ENCODE measurements at regions of chr17 and their contacts with region 1.

Region 1: GRCh38 chr17:7329374-7329996 is 350 bp upstream of the NEURL4 start:
- DNase-seq: peak; percentile 93 to 97
- H3K4me3 ChIP-seq: peak overlapping the region; percentile 89
- H3K4me3 Mint-ChIP-seq: peak overlapping the region; percentile 76
- H3K27ac Mint-ChIP-seq: peak overlapping the region; percentile 48
- H3K4me1 ChIP-seq: 0 out of 2 replicates have a peak, but pooled peaks cover 4% of the 10 kb centered on the region
- H3K4me1 Mint-ChIP-seq: peaks cover 10% of the 10 kb centered on the region
- H3K27me3 ChIP-seq: no peaks in the 10 kb centered on the region
- H3K27me3 Mint-ChIP-seq: no peaks in the 10 kb centered on the region
- CTCF ChIP-seq: no peak

Region 2: GRCh38 chr17:7314719-7315569 is 14.5 kb before region 1 on chr17 and contains the start of gene GPS2:
- CTCF ChIA-PET with region 1: interaction called, 3 read pairs
- POLR2A ChIA-PET with region 1: interaction called, 7 read pairs
- intact Hi-C with region 1: loop called (anchors 2 kb)
- DNase-seq: peak; percentile 81 to 86
- H3K4me3 ChIP-seq: peak within 1 kb of the TSS; percentile 82
- H3K4me3 Mint-ChIP-seq: peak within 1 kb of the TSS; percentile 82
- H3K27ac Mint-ChIP-seq: peak within 1 kb of the TSS; percentile 93
- H3K4me1 ChIP-seq: peaks cover 4% of the 10 kb centered on the region; the same call in 1 of the 2 replicates
- H3K4me1 Mint-ChIP-seq: peaks cover 18% of the 10 kb centered on the region
- H3K27me3 ChIP-seq: no peaks in the 10 kb centered on the region
- H3K27me3 Mint-ChIP-seq: no peaks in the 10 kb centered on the region
- CTCF ChIP-seq: no peak
- total RNA-seq, gene GPS2: 36.0 and 39.2 TPM in 2 replicates

Region 3: GRCh38 chr17:7502987-7503386 is 173.5 kb after region 1 on chr17:
- CTCF ChIA-PET with region 1: no interaction called
- POLR2A ChIA-PET with region 1: no interaction called
- intact Hi-C with region 1: no loop called
- DNase-seq: peak in 1 of 2 experiments; percentile 20
- H3K4me3 ChIP-seq: no peak overlapping the region
- H3K4me3 Mint-ChIP-seq: no peak overlapping the region
- H3K27ac Mint-ChIP-seq: no peak overlapping the region
- H3K4me1 ChIP-seq: no peaks in the 10 kb centered on the region
- H3K4me1 Mint-ChIP-seq: no peaks in the 10 kb centered on the region
- H3K27me3 ChIP-seq: no peaks in the 10 kb centered on the region
- H3K27me3 Mint-ChIP-seq: no peaks in the 10 kb centered on the region
- CTCF ChIP-seq: peak in 1 of 2 experiments; percentile 12